ENCODE measurements at regions of chr9 and their contacts with region 1.

Region 1: GRCh38 chr9:32928145-32928763 is 73.2 kb downstream of the APTX start:
- DNase-seq: no peak

Region 2: GRCh38 chr9:32866273-32866672 is 62.0 kb before region 1 on chr9:
- intact Hi-C with region 1: loop called (anchors 10 kb)
- DNase-seq: no peak

Region 3: DNA sequence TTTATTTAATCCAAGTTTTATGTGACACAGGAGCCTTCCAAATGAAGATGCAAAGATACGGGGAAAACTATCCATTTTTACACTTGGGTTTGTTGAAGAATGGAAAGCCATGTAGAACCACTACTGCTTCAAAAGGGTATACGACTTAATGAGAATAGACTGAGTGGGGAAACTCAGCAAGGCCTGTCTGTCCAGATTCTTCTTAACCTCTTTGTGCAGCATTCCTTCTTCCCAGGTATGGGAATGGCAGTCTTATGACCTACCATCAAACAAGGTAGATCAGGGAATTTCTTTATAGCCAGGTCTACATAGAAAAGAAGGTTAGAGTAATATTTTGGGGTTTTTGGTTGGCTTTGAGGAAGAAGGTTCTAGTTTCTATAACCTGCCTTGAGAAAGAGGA is 49.8 kb after region 1 on chr9:
- intact Hi-C with region 1: no loop called
- DNase-seq: no peak

Measured in head of caudate nucleus (tissue), 42 donors.